Right ventricle myocardium superior (tissue), 1 donor: ENCODE measurements at regions of chr6 and their contacts with region 1.

Region 1: DNA sequence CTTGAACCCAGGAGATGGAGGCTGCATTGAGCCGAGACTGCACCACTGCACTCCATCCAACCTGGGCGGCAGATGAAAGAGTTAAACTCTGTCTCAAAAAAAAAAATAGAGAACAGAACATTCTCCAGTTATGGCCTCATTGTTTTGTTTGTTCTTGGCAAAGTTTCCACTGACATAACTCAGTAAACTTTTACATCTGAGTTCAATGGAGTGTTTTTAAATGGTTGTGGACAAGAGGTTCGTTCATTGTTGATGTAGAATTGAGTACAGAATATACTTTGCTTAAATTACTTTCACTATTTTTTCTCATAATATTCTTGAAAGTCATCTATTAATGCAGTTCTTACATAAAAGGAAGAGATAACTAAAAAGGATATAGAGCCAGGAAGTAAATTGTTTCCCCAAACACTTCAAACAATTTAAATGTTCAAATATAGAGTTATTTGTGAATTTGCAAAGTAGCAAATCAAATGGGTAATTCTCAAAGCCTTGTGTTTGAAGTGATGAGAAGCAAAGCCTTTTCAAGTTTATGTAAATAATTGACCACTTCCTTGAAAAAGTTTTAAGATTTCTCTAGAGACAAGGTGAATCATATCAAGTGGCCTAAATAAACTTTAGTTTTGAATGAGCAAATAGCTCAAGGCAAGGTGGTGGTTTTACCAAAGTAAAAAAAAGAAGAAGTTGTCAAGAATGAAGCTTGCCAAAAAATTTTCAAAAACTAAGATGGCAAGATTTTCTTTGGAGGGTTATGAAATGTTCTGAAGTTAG is 42.4 kb upstream of the IFNGR1 start:
- DNase-seq: no peak
- ATAC-seq: peak; percentile 63

Region 2: GRCh38 chr6:136317021-136317694 is 944.4 kb before region 1 on chr6:
- intact Hi-C with region 1: no loop called
- DNase-seq: no peak
- ATAC-seq: peak; percentile 75

Region 3: GRCh38 chr6:137313928-137314855 is 52.6 kb after region 1 on chr6:
- intact Hi-C with region 1: loop called (anchors 5 kb)
- DNase-seq: peak; percentile 83
- ATAC-seq: peak; percentile 97

Region 4: GRCh38 chr6:137332637-137333280 is 71.2 kb after region 1 on chr6:
- intact Hi-C with region 1: no loop called
- DNase-seq: no peak
- ATAC-seq: peak; percentile 91

Region 5: DNA sequence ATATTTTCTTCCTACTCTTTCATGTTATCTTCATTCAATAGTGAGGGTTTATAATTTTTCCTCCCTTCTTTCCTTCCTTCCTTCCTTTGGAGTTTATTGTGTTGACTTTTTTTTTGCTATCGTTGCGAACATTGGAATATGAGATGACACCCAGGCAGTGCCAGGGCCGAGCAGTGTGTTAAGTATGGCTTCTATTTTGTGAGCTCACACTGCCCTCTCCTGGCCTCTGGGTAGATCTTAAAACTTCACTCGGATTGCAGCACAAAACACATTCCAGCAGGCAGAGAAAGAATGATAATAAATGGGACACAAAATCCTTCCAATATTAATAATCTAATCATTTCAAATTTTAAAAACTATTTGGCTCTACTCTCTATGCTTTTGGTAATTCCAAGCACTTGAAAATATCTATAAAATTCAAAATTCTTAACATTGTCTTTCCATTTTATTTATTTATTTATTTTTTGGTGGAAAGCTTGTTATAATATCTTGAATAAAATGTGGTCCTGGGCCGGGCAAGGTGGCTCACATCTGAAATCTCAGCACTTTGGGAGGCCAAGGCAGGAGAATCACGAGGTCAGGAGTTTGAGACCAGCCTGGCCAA is 380.0 kb after region 1 on chr6:
- intact Hi-C with region 1: loop called (anchors 10 kb)
- DNase-seq: peak; percentile 72
- ATAC-seq: peak; percentile 95